Activated CD8-positive, alpha-beta T cell treated with anti-CD3 and anti-CD28 coated beads for 36 hours (primary cell): ENCODE measurements at regions of chr18 and their contacts with region 1.

Region 1: GRCh38 chr18:46660955-46661749 is 4.1 kb upstream of the LOXHD1 start:
- DNase-seq: no peak
- ATAC-seq: no peak
- H3K4me3 Mint-ChIP-seq: no peak overlapping the region
- H3K27ac Mint-ChIP-seq: no peak overlapping the region
- H3K4me1 Mint-ChIP-seq: no peaks in the 10 kb centered on the region
- H3K27me3 Mint-ChIP-seq: no peaks in the 10 kb centered on the region
- CTCF ChIP-seq: no peak

Region 2: DNA sequence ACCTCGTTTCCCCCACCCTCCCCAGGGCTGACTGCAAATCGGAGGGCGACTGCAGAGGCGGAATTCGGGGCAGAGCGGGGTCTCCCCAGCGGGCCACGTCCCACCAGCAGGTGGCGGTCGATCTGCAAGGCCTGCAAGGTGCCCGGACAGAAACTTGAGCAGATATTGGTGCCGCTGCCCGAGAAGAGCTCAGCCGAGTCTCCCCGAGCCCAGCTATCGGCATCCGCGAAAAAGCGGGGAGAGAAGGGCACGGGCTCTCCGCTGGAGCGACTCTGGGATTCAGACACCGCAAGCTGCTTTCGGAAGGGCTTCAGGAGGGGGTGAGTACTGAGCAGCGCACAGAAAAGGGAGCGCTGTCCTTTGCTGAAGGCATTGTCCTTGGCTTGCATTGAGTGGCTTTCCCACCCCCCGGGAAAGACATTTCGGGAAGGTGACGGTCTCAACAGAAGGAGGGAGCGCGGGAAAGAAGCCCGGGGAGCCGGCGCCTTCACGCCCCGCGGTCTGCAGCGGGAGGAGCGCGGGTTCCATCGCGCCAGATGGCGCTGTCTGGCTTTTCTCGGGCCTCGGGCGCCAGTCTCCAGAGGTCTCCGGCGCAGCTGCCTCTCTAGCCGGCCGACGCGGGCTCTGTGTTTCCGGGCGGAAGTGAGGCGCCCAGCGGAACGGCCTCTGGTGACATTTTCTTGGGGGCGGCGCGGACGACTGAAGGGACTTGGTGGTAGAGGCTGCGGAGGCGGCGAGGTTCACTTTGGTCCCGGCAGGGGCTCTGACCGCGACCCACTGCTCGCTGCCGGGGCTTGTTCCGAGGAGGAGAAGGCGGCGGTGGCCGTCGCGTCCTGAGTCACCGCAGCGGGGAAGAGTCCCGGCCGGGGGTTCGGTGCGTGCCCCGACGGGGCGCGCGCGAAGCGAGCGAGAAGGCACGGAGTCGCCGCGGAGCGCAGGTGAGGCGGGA is 487.5 kb before region 1 on chr18:
- CTCF ChIA-PET with region 1: interaction called, 21 read pairs
- POLR2A ChIA-PET with region 1: no interaction called
- intact Hi-C with region 1: no loop called
- DNase-seq: peak; percentile 97
- ATAC-seq: peak; percentile 88
- H3K4me3 Mint-ChIP-seq: peak overlapping the region; percentile 94
- H3K27ac Mint-ChIP-seq: peak overlapping the region; percentile 98
- H3K4me1 Mint-ChIP-seq: peaks cover 36% of the 10 kb centered on the region
- H3K27me3 Mint-ChIP-seq: no peaks in the 10 kb centered on the region
- CTCF ChIP-seq: peak; percentile 97

Region 3: DNA sequence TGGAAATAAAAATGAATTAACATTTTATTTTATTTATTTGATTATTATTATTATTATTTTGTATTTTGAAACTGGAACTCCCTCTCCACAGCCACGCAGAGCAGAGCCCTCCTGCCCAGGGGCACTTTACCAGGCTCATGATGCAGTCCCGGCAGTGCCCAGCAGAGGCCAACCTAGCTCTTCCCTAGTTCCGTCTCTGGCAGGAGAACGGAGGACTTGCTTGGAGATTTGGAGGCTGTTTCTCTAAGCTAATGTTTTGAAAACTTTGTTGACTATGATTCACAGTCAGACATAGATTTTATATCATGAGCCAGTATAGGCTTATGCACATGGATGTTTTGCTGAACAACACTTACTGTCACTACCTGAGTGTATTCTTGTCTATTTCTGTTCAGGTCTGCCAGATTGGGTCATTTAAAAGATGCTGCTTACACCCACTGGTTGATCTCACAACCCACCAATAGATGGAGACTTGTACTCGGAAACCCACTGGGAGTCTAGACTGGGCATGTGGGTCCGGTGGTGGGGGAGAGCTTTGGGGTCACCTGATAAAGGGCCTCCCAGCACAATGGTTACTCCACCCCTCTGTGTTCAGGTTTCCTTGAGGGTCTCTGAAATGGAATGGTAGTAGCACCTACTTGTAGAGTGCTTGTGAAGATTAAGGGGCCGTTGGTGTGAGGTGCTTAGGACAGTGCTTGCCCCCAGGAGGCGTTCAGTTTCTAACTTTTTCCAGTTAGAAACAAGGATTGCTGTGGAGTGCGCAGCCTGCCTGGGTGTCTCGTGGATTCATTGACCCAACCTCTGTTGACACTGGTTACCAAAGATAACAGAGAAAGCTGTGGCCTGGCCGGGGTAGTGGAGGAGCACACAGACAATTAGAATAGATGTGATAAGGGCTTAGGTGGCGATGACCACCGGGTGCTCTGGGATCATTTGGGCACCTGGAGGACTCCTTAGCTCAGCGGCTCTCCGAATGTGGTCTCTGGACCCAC is 379.7 kb before region 1 on chr18:
- CTCF ChIA-PET with region 1: interaction called, 56 read pairs
- POLR2A ChIA-PET with region 1: no interaction called
- intact Hi-C with region 1: loop called (anchors 5 kb)
- DNase-seq: peak; percentile 79
- ATAC-seq: peak; percentile 96
- H3K4me3 Mint-ChIP-seq: no peak overlapping the region
- H3K27ac Mint-ChIP-seq: no peak overlapping the region
- H3K4me1 Mint-ChIP-seq: peaks cover 4% of the 10 kb centered on the region
- H3K27me3 Mint-ChIP-seq: no peaks in the 10 kb centered on the region
- CTCF ChIP-seq: peak; percentile 96

Region 4: DNA sequence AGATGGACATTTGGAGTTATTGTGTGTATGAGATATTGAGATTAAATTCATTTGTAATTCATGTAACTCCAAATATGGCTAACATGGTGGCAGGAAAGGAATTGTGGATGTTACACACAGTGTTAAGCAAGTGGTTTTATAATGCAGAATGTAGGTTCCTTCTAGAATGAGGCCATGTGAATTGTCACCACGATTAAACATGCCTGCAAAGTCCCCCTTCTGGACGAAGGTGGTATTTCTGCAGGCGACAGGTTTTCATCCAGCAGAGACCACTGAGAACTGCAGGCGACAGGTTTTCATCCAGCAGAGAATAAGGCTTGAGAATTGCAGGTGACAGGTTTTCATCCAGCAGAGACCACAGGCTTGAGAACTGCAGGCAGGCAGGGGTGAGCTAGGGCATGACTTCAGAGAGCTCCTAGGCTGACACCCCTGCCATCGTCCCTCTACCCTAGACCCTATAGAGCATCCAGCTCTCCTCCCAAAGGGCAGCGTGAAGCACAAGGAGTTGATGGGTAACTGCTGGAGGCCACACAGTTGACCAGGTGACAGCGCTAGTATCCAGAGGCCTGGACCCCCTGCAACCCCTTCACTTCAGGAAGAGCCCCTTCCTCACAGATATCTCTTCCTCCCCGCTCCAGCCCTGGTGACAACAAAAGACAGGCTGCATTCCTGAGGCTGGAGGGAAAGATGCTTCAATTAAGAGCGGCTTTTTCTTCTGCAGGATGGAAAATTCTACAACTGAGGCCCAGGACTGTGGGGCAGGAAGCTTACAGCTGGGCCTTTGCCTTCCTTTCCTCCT is 179.9 kb before region 1 on chr18:
- CTCF ChIA-PET with region 1: interaction called, 14 read pairs
- POLR2A ChIA-PET with region 1: no interaction called
- intact Hi-C with region 1: no loop called
- DNase-seq: peak; percentile 79
- ATAC-seq: peak; percentile 78
- H3K4me3 Mint-ChIP-seq: no peak overlapping the region
- H3K27ac Mint-ChIP-seq: no peak overlapping the region
- H3K4me1 Mint-ChIP-seq: no peaks in the 10 kb centered on the region
- H3K27me3 Mint-ChIP-seq: peaks cover 3% of the 10 kb centered on the region
- CTCF ChIP-seq: peak; percentile 83

Region 5: DNA sequence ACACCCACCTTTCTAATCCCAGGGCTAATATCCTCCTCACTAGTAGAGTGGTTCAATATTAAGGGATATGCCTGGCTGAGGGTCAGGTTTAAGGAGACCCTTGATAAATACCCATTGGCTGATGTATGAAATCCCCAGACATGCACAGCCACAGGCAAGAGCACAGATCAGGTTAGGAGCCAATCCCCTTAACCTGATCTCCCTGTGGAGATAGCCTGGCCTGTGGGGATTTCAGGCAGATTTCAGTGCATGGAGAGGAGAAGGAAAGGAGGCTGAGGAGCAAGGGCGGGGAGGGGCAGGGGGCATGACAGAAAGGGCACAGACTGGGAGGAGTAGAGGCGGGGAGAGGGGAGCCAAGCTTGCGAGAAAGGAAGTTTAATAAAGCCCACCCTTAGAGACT is 133.1 kb before region 1 on chr18:
- CTCF ChIA-PET with region 1: interaction called, 12 read pairs
- POLR2A ChIA-PET with region 1: no interaction called
- intact Hi-C with region 1: no loop called
- DNase-seq: no peak
- ATAC-seq: no peak
- H3K4me3 Mint-ChIP-seq: no peak overlapping the region
- H3K27ac Mint-ChIP-seq: no peak overlapping the region
- H3K4me1 Mint-ChIP-seq: no peaks in the 10 kb centered on the region
- H3K27me3 Mint-ChIP-seq: no peaks in the 10 kb centered on the region
- CTCF ChIP-seq: no peak

Region 6: DNA sequence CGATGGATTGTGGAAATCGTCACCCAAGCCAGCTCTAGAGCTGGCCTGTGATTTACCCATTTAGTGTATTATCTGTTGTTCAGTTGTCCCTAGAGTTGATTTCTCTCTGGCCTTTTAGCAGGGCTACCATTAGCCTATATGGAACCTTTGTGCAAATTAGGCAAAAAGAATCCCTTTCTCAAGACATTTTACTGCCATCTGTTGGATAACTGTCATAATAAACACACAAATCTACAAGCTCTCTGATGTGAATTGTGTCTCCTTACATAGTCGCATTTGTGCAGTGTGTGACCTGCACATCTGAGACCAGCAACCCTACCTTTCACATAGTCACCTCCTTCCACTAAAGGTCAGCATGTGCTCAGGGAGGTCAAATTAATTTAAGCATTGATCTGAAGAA is 38.2 kb before region 1 on chr18:
- CTCF ChIA-PET with region 1: interaction called, 15 read pairs
- POLR2A ChIA-PET with region 1: no interaction called
- intact Hi-C with region 1: no loop called
- DNase-seq: no peak
- ATAC-seq: peak; percentile 33
- H3K4me3 Mint-ChIP-seq: no peak overlapping the region
- H3K27ac Mint-ChIP-seq: peak overlapping the region; percentile 53
- H3K4me1 Mint-ChIP-seq: peaks cover 41% of the 10 kb centered on the region
- H3K27me3 Mint-ChIP-seq: no peaks in the 10 kb centered on the region
- CTCF ChIP-seq: no peak

Region 7: DNA sequence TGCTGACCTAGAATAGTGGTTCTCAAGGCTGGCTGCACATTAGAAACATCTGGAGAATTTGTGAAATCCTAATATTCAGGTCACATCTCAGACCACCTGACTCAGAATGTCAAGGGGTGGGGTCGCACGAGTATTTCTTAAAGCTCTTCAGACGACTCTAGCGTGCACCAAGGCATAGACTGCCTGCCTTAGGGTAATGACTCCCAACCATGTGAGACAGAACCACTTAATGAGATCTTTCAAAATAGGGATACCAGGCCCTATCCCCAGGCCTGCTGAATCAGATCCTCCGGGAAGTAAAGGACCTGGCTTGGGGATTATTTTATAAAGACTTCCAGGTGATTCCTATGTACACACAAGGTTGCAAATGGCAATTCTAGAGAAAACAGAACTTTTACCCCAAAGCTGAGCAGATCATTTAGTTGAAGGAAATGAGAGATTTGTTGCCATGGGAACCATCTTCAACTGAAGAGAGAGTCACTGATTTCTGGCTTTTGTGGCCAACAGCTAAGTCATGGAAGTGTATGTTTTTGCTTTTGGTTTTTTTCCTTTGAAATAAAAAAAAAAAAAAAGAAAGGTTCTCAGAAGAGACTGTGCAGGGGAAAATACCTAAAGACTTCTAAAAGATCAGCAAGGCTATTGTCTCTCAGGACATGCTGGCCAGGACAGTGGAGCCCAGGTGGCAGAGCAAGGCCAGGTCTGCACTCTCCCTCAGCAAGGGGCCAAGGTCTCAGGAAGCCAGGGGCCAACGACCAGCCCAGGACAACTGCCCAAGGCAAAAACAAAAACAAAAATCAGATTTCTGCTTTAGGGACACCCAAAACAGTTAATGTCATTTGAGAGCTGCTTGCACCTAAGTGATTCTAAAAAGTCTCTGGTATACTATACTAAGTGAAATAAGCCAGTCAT is 11.2 kb after region 1 on chr18:
- CTCF ChIA-PET with region 1: interaction called, 55 read pairs
- POLR2A ChIA-PET with region 1: no interaction called
- intact Hi-C with region 1: no loop called
- DNase-seq: peak; percentile 11
- ATAC-seq: peak; percentile 84
- H3K4me3 Mint-ChIP-seq: no peak overlapping the region
- H3K27ac Mint-ChIP-seq: no peak overlapping the region
- H3K4me1 Mint-ChIP-seq: peaks cover 11% of the 10 kb centered on the region
- H3K27me3 Mint-ChIP-seq: peaks cover 14% of the 10 kb centered on the region
- CTCF ChIP-seq: no peak

Region 8: DNA sequence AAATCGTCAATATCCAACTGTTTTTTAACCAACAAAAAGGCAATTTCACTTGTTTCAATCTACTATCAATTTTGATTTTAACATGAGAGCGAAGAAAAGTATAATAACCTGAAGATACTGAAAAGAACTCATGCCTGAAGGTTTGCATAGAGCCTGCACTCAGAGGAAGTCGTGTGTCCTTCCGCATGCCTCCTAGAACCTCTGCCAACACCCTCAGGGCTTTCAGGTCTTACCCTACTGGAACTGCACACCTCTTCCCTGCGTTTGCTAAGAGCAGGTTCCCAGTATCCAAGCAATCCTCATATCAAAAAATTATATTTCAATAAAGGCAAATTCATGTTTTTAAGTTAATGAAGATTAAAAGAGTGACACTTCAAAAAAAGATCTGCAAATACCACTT is 181.4 kb after region 1 on chr18:
- CTCF ChIA-PET with region 1: no interaction called
- POLR2A ChIA-PET with region 1: no interaction called
- intact Hi-C with region 1: no loop called
- DNase-seq: no peak
- ATAC-seq: no peak
- H3K4me3 Mint-ChIP-seq: no peak overlapping the region
- H3K27ac Mint-ChIP-seq: no peak overlapping the region
- H3K4me1 Mint-ChIP-seq: no peaks in the 10 kb centered on the region
- H3K27me3 Mint-ChIP-seq: no peaks in the 10 kb centered on the region
- CTCF ChIP-seq: no peak